Ascending aorta (tissue), 2 donors: ENCODE measurements at regions of chr6 and their contacts with region 1.

Region 1: GRCh38 chr6:89242574-89243330 is 25.6 kb upstream of the GABRR1 start:
- DNase-seq: no peak
- H3K4me3 ChIP-seq: no peak overlapping the region
- H3K27ac ChIP-seq: no peak overlapping the region
- H3K4me1 ChIP-seq: no peaks in the 10 kb centered on the region
- H3K27me3 ChIP-seq: no peaks in the 10 kb centered on the region
- CTCF ChIP-seq: peak; percentile 34 to 66 (median 47)

Region 2: DNA sequence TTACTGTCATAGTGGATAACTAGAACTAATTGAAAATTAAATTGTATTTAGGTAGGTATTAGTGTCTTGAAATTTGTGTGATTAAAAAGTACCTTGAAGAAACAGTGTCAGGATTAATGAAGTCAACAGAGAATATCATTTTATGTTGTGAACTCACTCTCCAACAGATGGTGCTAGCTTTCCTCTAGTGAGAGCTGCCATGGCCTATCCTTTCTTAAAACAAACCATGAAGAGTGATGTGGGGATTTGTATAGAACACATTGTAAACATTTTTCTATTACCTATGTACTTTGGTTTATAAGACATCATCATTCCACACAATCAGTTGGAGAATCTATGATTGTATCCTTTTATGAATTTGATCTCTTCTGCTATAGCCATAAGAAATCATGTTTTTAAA is 120.1 kb before region 1 on chr6:
- intact Hi-C with region 1: loop called (anchors 1 kb)
- DNase-seq: no peak
- H3K4me3 ChIP-seq: no peak overlapping the region
- H3K27ac ChIP-seq: no peak overlapping the region
- H3K4me1 ChIP-seq: peaks cover 0 to 7% of the 10 kb centered on the region in 2 donors
- H3K27me3 ChIP-seq: no peaks in the 10 kb centered on the region
- CTCF ChIP-seq: peak in 2 of 3 experiments; percentile 48 to 65

Region 3: GRCh38 chr6:89270951-89271721 is 28.4 kb after region 1 on chr6:
- intact Hi-C with region 1: no loop called
- DNase-seq: no peak
- H3K4me3 ChIP-seq: no peak overlapping the region
- H3K27ac ChIP-seq: no peak overlapping the region
- H3K4me1 ChIP-seq: no peaks in the 10 kb centered on the region
- H3K27me3 ChIP-seq: no peaks in the 10 kb centered on the region
- CTCF ChIP-seq: no peak